ENCODE measurements at regions of chr9 and their contacts with region 1.

Region 1: GRCh38 chr9:136400038-136400834 is at the start of gene SNAPC4:
- DNase-seq: peak; percentile 94
- total RNA-seq, gene SNAPC4: 3.9 TPM

Region 2: DNA sequence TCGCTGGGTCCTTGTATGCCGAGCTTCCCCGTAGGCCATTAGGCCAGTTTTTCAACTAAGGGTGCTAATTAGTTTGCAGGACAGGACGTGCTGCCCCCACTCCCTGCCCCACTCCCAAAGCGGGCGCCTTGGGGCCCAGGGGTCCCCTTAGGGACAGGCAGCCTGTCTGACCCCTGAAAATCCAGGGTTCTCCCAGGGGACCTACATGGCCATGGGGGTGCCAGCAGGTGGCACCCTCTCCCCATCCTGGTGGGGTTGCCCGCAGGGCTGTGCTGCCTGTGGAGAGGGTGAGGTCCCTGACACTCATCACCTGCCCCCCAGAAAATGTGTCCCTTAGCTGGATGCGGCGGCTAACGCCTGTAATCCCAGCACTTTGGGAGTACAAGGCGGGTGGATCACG is 87.8 kb before region 1 on chr9:
- intact Hi-C with region 1: loop called (anchors 2 kb)
- DNase-seq: no peak

Region 3: DNA sequence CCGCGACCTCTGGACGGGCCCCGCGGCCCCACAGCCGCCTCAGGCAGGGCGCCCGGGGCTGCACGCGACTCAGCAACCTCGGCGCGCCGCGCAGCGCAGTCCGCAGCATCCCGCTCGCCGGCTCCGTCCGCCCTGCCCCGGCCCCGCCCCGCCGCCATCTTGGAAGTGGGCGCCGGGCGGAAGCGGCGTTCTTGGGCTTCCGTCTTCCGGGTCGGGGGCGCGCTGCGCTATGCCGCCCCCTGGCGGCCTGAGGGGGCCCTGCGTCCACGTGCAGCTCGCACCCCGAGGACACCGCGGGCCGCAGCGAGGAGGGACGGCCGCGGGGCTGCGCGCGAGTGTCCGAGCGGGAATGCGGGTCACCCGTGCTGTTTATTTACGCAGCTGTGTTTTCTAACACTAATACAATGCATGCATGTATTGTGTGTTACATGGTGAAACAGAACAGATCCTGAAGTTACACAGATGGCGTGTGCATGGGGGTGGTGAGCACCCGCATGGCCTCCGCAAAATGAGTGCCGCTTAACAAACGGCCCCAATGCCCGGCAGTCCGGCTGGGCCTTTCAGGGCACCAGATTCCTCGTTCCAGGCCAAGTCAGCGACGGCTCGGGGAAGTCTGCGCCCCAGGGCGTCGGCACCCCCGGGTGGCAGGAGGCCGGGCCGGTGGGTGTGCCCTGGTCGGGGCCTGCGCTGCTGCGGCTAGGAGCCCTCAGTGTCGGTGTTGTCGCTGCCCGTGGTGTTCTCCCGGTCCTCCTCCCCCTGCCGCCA is 36.4 kb before region 1 on chr9 and contains the start of gene DNLZ:
- intact Hi-C with region 1: loop called (anchors 1 kb)
- DNase-seq: peak; percentile 93
- total RNA-seq, gene DNLZ: 34.1 TPM

Region 4: DNA sequence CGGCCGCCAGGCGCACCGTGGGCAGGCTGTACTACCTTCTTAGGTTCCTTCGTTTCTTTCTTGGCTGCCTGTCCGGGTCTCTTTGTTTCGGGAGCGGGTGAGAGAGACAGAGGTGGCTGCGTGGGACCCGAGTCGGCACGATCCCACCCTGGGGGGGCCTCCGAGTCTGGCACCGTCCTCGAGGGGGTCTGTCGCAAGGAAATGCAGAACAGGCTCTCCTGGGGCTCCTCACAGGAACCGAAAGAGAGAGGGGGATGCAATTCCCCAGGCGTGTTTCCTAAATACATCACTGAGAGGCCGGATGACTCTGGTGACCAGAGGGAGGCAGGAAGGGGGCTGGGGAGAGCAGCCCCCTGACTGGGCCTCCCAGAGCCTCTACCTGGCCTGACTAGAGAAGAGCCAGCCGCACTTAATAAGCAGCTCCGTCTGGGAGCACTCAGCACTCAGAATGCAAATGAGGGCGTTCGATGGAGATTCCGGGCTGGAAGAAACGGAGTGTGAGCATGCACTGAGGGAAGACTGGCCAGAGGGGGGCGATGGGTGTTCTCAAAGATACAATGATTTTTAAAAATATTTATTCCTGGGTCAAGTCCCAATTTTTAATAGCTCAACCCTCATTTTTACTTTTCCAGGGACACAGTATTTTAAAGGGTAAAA is 51.1 kb after region 1 on chr9:
- intact Hi-C with region 1: no loop called
- DNase-seq: no peak

Measured in cardiac septum (tissue), 1 donor.